Activated B cell treated with CpG ODN at 0.5 μM for 24 hours (primary cell): ENCODE measurements at regions of chr4 and their contacts with region 1.

Region 1: GRCh38 chr4:118270492-118270891 is 82.3 kb downstream of the PRSS12 start:
- DNase-seq: no peak
- ATAC-seq: no peak
- H3K4me3 Mint-ChIP-seq: no peak overlapping the region
- H3K27ac Mint-ChIP-seq: no peak overlapping the region
- H3K4me1 Mint-ChIP-seq: peaks cover 2% of the 10 kb centered on the region
- H3K27me3 Mint-ChIP-seq: peaks cover 9% of the 10 kb centered on the region
- CTCF ChIP-seq: peak; percentile 74

Region 2: DNA sequence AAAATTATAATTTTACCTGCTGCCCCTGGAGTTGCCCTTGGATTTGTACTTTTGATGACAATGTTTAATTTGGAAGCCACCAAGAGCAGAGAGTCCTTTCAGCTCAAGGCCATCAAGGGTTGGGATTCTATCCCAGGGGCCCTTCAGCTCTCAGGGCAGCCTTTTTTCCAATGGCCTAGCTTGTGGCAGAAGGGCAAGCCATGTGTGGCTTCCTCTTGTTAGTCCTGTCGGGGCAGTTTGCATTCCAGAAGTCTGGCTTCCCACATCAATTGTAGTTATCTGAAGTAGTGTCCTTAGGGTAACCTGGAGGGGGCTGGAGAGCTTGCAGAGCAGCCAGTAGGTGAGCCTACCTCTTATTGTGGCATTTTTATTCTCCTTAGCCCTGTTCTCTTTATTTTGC is 1754.5 kb before region 1 on chr4:
- CTCF ChIA-PET with region 1: no interaction called
- POLR2A ChIA-PET with region 1: no interaction called
- intact Hi-C with region 1: no loop called
- DNase-seq: no peak
- ATAC-seq: no peak
- H3K4me3 Mint-ChIP-seq: no peak overlapping the region
- H3K27ac Mint-ChIP-seq: no peak overlapping the region
- H3K4me1 Mint-ChIP-seq: no peaks in the 10 kb centered on the region
- H3K27me3 Mint-ChIP-seq: no peaks in the 10 kb centered on the region
- CTCF ChIP-seq: no peak

Region 3: GRCh38 chr4:116599859-116600258 is 1670.6 kb before region 1 on chr4:
- CTCF ChIA-PET with region 1: no interaction called
- POLR2A ChIA-PET with region 1: no interaction called
- intact Hi-C with region 1: loop called (anchors 5 kb)
- DNase-seq: no peak
- ATAC-seq: no peak
- H3K4me3 Mint-ChIP-seq: no peak overlapping the region
- H3K27ac Mint-ChIP-seq: no peak overlapping the region
- H3K4me1 Mint-ChIP-seq: no peaks in the 10 kb centered on the region
- H3K27me3 Mint-ChIP-seq: no peaks in the 10 kb centered on the region
- CTCF ChIP-seq: no peak

Region 4: GRCh38 chr4:118224239-118224829 is 46.2 kb before region 1 on chr4:
- CTCF ChIA-PET with region 1: no interaction called
- POLR2A ChIA-PET with region 1: no interaction called
- intact Hi-C with region 1: loop called (anchors 2 kb)
- DNase-seq: no peak
- ATAC-seq: no peak
- H3K4me3 Mint-ChIP-seq: no peak overlapping the region
- H3K27ac Mint-ChIP-seq: no peak overlapping the region
- H3K4me1 Mint-ChIP-seq: no peaks in the 10 kb centered on the region
- H3K27me3 Mint-ChIP-seq: peaks cover 2% of the 10 kb centered on the region
- CTCF ChIP-seq: peak; percentile 70